ENCODE measurements at regions of chr17 and their contacts with region 1.

Region 1: DNA sequence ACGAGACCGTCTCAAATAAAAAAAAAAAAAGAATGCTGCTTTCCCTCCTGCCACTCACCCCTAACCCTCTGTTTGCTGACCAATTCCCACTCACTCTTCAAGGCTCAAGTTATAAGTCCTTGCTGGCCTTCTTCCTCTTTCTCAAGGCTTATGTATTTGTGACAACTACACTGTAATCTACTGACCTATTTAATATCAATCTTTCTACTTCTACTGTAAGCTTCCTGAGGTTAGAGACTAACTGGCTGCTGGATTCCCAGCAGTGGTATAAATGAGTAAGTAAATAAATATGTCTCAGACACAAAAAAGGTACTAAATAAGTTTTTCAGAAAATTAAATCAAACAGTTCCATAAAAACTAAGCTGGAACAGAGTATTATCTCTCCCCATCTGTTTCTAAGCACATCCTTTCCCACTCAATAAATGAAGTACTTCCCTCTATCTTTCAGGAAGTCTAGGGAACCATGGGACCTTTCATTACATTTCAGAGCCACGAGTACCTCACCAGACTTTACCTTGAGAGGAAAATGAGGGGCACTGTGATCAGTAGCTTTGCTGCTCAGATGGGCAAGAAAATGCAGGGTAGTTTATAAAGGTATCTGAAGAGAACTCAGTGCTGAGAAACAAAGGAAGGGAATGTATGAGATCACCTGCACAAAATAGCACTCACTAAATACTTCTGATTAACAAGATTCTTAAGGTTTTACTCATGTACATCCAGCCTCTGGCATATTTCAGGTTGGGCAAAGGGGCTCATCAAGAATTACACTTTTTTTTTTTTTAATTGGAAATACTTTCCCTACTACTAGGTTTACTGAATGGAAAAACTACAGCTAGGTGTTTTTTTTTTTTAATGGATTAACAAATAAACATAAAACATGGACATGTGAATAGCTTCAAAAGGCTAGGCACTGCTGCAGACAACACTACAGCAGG is 10.8 kb downstream of the SSH2 start:
- DNase-seq: peak; percentile 58
- ATAC-seq: peak; percentile 68
- H3K4me3 ChIP-seq: no peak overlapping the region; the same call in 1 of the 2 replicates
- H3K27ac ChIP-seq: no peak overlapping the region
- H3K4me1 ChIP-seq: peaks cover 4% of the 10 kb centered on the region
- H3K27me3 ChIP-seq: no peaks in the 10 kb centered on the region
- CTCF ChIP-seq: no peak
- POLR2A ChIP-seq: no peak
- RAD21 ChIP-seq: no peak

Region 2: DNA sequence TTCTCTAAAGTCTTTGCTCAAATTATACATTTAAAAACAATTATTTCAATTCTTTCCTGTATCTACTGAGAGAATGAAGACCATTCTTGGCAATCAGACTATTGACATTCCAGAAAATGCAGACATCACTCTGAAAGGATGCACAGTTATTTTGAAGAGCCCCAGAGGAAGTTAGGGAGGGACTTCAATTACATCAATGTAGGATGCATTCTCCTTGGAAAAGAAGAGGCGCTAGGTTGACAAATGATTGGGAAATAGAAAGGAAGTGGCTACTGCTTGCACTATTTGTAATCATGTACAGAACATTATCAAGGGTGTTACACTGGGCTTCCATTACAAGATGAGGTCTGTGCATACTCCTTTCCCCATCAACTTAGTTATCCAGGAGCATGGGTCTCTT is 63.5 kb before region 1 on chr17:
- CTCF ChIA-PET with region 1: no interaction called
- POLR2A ChIA-PET with region 1: no interaction called
- dilution Hi-C with region 1: no loop called
- in situ Hi-C with region 1: no loop called
- intact Hi-C with region 1: loop called (anchors 10 kb)
- DNase-seq: peak; percentile 75
- ATAC-seq: peak; percentile 83
- H3K4me3 ChIP-seq: no peak overlapping the region
- H3K27ac ChIP-seq: no peak overlapping the region
- H3K4me1 ChIP-seq: peaks cover 1% of the 10 kb centered on the region; the same call in 1 of the 2 replicates
- H3K27me3 ChIP-seq: no peaks in the 10 kb centered on the region
- CTCF ChIP-seq: no peak
- POLR2A ChIP-seq: no peak
- RAD21 ChIP-seq: no peak

Region 3: GRCh38 chr17:29996458-29996857 is 77.3 kb after region 1 on chr17:
- CTCF ChIA-PET with region 1: no interaction called
- POLR2A ChIA-PET with region 1: no interaction called
- dilution Hi-C with region 1: no loop called
- in situ Hi-C with region 1: no loop called
- intact Hi-C with region 1: no loop called
- DNase-seq: no peak
- ATAC-seq: no peak
- H3K4me3 ChIP-seq: no peak overlapping the region
- H3K27ac ChIP-seq: no peak overlapping the region
- H3K4me1 ChIP-seq: peaks cover 3% of the 10 kb centered on the region; the same call in 1 of the 2 replicates
- H3K27me3 ChIP-seq: peaks cover 8% of the 10 kb centered on the region; the same call in 1 of the 2 replicates
- CTCF ChIP-seq: no peak
- POLR2A ChIP-seq: no peak
- RAD21 ChIP-seq: no peak